Activated B cell treated with CpG ODN at 0.5 μM for 24 hours (primary cell): ENCODE measurements at regions of chr6 and their contacts with region 1.

Region 1: DNA sequence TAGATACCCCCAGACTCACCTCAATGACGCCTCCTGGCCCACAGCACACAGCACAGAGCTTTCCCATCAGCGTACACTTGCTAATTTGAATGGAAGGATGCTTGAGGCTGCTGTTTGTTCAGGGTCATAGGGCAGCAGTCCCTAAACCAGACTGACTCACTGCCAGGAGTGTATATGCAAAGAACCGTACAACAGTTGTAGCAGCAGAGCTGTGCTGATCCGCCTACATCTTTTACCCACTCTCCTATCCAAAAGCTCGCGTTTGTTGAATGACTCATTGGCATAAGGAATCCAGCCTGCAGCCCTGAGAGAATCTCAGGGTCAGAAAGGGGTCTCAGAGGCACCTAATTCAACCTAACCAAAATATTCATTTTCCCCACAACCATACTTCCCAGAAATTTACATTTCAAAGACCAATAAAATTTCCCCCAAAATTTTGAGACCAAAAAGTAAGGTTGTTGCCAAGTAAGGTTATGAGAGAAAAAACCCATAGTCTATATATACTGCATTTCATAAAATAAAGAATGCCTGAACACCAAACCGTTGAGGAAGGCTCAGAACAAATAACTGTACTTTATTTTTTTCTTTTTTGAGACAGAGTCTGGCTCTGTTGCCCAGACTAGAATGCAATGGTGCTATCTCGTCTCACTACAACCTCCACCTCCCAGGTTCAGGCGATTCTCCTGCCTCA is 35.3 kb upstream of the CCND3 start:
- DNase-seq: no peak
- ATAC-seq: peak; percentile 76
- H3K4me3 Mint-ChIP-seq: peak overlapping the region; percentile 47
- H3K27ac Mint-ChIP-seq: peak overlapping the region; percentile 85
- H3K4me1 Mint-ChIP-seq: peaks cover 72% of the 10 kb centered on the region
- H3K27me3 Mint-ChIP-seq: no peaks in the 10 kb centered on the region
- CTCF ChIP-seq: no peak

Region 2: DNA sequence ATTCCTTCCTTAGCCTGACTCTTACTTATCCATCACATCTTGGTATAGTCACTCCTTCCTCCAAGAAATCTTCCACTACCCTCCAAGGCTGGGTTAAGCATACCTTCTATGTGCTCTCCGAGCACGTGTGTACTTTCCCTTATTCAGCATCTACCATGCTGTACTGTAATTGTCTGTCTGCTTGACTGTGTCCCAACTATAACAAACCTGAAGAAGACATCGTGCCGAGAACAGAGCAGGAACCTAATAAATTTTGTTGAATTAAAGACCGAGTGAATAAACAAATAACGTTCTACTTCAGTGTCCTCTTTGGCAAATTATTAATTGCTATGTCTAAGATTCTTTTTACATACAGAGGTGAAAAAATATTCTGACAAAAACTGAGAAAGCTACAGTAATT is 117.6 kb before region 1 on chr6:
- CTCF ChIA-PET with region 1: no interaction called
- POLR2A ChIA-PET with region 1: no interaction called
- intact Hi-C with region 1: no loop called
- DNase-seq: no peak
- ATAC-seq: no peak
- H3K4me3 Mint-ChIP-seq: no peak overlapping the region
- H3K27ac Mint-ChIP-seq: no peak overlapping the region
- H3K4me1 Mint-ChIP-seq: no peaks in the 10 kb centered on the region
- H3K27me3 Mint-ChIP-seq: no peaks in the 10 kb centered on the region
- CTCF ChIP-seq: no peak

Region 3: DNA sequence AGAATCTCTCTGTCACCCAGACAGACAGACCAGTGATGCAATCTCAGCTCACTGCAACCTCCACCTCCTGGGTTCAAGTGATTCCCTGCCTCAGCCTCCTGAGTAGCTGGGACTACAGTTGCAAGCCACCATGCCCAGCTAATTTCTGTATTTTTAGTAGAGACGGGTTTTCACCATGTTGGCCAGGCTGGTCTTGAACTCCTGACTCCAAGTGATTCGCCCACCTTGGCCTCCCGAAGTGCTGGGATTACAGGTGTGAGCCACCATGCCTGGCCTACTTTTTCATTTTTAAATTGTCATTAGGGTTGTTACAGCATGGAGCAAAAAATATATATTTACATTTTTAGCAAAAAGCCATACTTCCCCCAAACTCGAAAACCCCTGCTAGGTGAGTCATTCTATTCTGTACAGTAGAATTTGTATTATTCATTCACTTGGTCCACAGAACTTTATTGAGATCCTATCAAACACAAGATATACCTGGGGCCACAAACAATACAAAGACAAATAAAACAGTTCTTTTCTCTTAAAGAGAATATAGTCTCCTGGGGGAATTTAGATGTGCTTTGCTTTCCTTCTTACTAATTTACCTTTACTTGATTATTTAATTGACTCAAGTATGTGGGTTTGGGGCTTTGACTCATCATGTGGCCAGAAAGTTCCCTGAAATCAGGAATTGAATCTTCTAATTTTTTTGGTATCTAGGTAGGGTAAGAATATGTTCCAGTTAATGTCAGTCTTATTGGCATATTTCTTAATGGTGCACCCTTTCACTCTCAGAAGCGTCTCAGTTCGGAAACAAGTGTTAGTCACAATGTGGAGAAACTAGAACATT is 18.7 kb before region 1 on chr6:
- CTCF ChIA-PET with region 1: no interaction called
- POLR2A ChIA-PET with region 1: interaction called, 4 read pairs
- intact Hi-C with region 1: loop called (anchors 1 kb)
- DNase-seq: no peak
- ATAC-seq: peak; percentile 81
- H3K4me3 Mint-ChIP-seq: peak overlapping the region; percentile 2
- H3K27ac Mint-ChIP-seq: peak overlapping the region; percentile 66
- H3K4me1 Mint-ChIP-seq: peaks cover 31% of the 10 kb centered on the region
- H3K27me3 Mint-ChIP-seq: no peaks in the 10 kb centered on the region
- CTCF ChIP-seq: no peak

Region 4: GRCh38 chr6:42021847-42022754 is 45.2 kb after region 1 on chr6:
- CTCF ChIA-PET with region 1: no interaction called
- POLR2A ChIA-PET with region 1: interaction called, 13 read pairs
- intact Hi-C with region 1: loop called (anchors 2 kb)
- DNase-seq: peak; percentile 58
- ATAC-seq: peak; percentile 38
- H3K4me3 Mint-ChIP-seq: peak overlapping the region; percentile 75
- H3K27ac Mint-ChIP-seq: peak overlapping the region; percentile 99
- H3K4me1 Mint-ChIP-seq: peaks cover 83% of the 10 kb centered on the region
- H3K27me3 Mint-ChIP-seq: no peaks in the 10 kb centered on the region
- CTCF ChIP-seq: no peak